ENCODE measurements at regions of chr15 and their contacts with region 1.

Region 1: DNA sequence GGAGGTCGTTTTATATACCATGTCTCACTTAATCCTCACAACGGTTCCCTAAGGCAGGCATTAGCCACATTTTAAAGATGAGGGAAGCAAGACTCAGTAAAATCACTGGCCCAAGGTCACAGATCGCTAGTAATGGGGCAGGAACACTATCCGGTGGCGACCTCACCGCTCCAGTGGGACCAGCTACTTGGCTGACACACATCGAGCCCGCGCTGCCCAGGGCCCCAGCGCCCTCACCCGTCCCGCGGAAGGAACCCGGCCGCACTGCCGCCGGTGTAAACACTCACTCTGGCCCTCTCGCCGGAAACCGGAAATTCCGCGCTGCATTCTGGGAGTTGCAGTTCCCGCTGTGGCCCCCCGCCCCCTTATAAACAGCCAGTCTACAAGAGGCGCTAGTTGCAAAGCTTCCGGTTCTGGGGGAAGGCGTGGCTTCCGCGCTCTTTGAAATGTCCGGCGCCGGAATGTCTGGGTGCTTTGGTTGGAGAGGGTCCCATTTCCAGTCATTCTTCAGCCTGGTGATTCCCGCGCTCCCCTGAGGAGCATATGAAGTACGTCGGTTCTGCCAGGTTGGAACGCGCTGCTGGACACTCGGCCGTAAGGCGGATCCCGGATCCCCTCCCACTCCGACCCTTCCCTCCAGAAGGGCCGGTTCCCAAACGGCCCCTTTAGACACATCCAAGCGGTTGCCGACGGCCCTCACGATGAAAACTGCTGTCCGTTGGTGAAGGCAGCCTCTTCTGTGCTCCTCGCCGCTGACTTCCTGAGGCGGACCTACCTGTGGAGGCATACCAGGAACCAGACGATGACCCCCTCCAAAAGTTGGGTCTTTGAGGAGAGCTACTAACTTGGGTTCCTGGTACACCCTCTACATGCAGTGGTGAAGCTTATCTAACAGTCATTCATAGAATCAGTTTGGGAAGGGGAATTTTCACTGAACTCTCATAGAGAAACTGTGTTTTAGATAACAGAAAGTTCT is at the start of gene UBL7:
- DNase-seq: peak; percentile 99
- ATAC-seq: peak; percentile 97
- H3K4me3 Mint-ChIP-seq: peak within 1 kb of the TSS; percentile 80
- H3K27ac Mint-ChIP-seq: peak within 1 kb of the TSS; percentile 92
- H3K4me1 Mint-ChIP-seq: peaks cover 49% of the 10 kb centered on the region
- H3K27me3 Mint-ChIP-seq: no peaks in the 10 kb centered on the region
- CTCF ChIP-seq: no peak
- total RNA-seq, gene UBL7: 48.8 to 53.3 TPM

Region 2: DNA sequence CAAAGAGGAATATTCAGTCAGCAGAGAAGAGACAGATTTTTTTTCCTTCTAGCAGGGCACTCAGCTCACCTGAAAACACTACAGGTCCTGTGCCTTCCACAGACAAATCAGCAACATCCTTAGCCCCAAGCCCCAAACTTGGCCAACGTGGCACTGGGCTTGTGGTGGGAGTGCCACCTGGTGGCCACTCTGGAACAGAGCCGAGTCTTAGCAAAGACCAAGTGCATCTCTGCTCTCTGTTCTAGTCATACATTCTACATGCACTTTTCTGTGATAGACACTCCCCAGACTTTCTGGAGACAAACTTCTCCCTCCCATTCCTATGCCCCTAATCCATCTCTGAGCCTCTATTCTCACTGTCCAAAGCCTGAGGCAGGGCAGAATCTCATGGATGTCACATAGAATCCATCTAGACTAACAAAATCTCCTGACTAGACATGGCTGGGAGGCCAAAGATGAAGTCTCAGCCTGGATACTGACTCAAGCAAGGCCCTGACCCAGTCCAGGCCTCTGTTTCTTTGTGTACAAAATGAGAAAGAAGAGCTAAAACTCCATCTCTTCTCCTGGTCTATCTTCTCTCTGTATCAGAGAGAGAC is 22.3 kb before region 1 on chr15:
- CTCF ChIA-PET with region 1: interaction called, 8 read pairs
- POLR2A ChIA-PET with region 1: interaction called, 11 read pairs
- intact Hi-C with region 1: no loop called
- DNase-seq: peak; percentile 88
- ATAC-seq: peak; percentile 78
- H3K4me3 Mint-ChIP-seq: no peak overlapping the region
- H3K27ac Mint-ChIP-seq: no peak overlapping the region
- H3K4me1 Mint-ChIP-seq: peaks cover 32% of the 10 kb centered on the region
- H3K27me3 Mint-ChIP-seq: no peaks in the 10 kb centered on the region
- CTCF ChIP-seq: peak; percentile 87

Region 3: DNA sequence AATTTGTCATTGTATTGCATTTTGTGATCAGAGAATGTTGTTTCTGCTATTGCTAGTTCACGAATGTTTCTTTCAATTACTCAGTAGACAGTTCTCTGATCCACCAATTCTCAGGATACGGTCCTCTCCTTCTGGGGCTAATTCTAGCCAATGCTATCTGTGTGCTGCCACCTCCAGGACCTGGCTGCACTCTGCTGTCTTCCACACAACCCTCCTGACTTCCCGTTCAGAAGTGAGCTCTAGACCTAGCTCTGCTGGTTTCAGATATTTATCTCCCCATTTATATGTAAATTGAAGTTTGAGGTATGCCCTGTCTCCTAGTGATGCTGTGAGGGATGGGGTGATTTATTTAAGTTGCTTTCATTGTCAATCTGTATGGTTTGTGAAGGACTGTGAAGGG is 21.5 kb after region 1 on chr15:
- CTCF ChIA-PET with region 1: interaction called, 4 read pairs
- POLR2A ChIA-PET with region 1: interaction called, 11 read pairs
- intact Hi-C with region 1: no loop called
- DNase-seq: no peak
- ATAC-seq: no peak
- H3K4me3 Mint-ChIP-seq: no peak overlapping the region
- H3K27ac Mint-ChIP-seq: no peak overlapping the region
- H3K4me1 Mint-ChIP-seq: peaks cover 2% of the 10 kb centered on the region
- H3K27me3 Mint-ChIP-seq: no peaks in the 10 kb centered on the region
- CTCF ChIP-seq: no peak

Region 4: DNA sequence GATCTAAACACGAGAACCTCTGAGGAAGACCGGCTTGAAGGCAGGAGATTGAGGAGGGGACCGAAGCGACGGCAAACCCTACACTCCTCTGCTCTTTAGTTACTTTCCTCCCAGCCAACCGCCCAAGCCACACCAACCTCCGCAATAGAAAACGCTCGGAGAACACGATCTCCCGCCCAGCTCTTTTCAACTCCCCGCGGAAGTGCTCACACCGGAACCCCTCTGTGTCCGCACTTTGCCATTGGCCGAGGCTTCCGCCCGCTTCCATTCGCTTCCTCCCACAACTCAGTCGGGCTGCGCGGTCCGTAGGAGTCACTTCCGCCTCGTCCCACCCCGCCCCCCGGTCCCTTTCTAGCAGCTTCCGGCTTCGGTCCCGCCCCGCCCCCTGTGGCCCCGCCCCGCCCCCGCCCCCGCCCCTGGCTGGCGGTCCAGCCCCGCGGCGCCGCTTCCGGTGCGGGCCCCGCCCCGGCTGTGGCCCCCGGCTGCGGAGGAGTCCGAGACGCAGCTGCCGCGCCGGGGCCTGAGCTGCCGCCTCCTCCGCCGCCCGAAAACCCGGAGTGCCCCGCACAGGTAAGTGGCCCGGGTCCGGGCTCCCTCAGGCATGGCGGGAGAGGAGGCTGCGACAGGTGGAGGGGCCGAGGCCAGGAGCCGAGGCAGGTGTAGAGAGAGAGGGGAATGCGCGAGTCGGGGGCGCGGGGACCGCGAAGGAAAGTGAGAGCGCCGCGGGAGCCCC is 79.8 kb after region 1 on chr15 and contains the start of gene ARID3B:
- CTCF ChIA-PET with region 1: interaction called, 8 read pairs
- POLR2A ChIA-PET with region 1: interaction called, 20 read pairs
- intact Hi-C with region 1: loop called (anchors 2 kb)
- DNase-seq: peak; percentile 99
- ATAC-seq: peak; percentile 88
- H3K4me3 Mint-ChIP-seq: peak within 1 kb of the TSS; percentile 98
- H3K27ac Mint-ChIP-seq: peak within 1 kb of the TSS; percentile 99
- H3K4me1 Mint-ChIP-seq: peaks cover 48% of the 10 kb centered on the region
- H3K27me3 Mint-ChIP-seq: no peaks in the 10 kb centered on the region
- CTCF ChIP-seq: no peak
- total RNA-seq, gene ARID3B: 35.2 to 36.2 TPM

Region 5: DNA sequence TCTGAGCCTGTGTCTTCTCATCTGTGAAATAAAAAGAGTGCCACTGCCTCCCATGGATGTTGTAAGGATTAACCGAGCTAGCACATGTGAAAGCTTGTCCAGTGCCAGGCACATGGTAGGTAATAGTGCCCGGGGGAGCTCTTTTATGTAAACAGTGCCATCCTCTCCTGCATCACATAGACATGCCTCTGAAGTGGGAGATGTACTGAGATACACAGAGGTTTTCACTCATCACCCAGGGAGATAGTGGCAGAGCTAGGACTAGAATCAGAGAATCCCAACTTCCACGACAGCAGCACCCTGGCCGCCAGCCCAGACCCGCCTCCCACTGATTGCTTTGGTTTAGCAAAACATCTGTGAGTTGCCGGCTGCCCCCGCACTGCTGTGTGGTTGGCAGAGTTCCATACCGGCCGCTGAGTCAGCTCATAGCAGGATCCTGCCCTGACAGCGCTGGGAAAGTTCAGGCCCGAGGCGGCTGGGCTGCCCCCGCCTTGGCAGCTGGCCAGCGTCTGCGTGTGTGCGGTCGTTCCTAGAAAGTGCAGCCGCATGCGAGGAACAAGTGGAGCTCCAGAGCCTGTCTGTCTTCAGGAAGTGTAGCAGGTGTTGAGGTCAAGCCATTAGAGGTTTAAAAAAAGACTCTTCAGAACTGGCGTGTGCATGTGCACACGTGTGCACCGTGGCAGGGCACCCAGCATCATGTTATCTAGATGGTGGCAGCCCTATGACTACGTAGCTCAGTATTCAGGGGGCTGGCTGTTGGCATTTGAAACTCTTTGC is 84.9 kb after region 1 on chr15:
- CTCF ChIA-PET with region 1: interaction called, 8 read pairs
- POLR2A ChIA-PET with region 1: interaction called, 20 read pairs
- intact Hi-C with region 1: loop called (anchors 2 kb)
- DNase-seq: peak; percentile 99
- ATAC-seq: peak; percentile 75
- H3K4me3 Mint-ChIP-seq: peak overlapping the region; percentile 63
- H3K27ac Mint-ChIP-seq: peak overlapping the region; percentile 72
- H3K4me1 Mint-ChIP-seq: peaks cover 80% of the 10 kb centered on the region
- H3K27me3 Mint-ChIP-seq: no peaks in the 10 kb centered on the region
- CTCF ChIP-seq: no peak

Measured in activated CD8-positive, alpha-beta T cell treated with anti-CD3 and anti-CD28 coated beads for 36 hours (primary cell).